ENCODE measurements at regions of chr3 and their contacts with region 1.

Region 1: GRCh38 chr3:100089812-100090668 is 24.3 kb downstream of the FILIP1L start:
- DNase-seq: no peak
- H3K4me3 Mint-ChIP-seq: peak overlapping the region; percentile 0
- H3K27ac Mint-ChIP-seq: peak overlapping the region; percentile 60
- H3K4me1 Mint-ChIP-seq: peaks cover 49% of the 10 kb centered on the region
- H3K27me3 Mint-ChIP-seq: peaks cover 3% of the 10 kb centered on the region

Region 2: GRCh38 chr3:99842826-99843589 is 247.0 kb before region 1 on chr3:
- intact Hi-C with region 1: loop called (anchors 5 kb)
- DNase-seq: no peak
- H3K4me3 Mint-ChIP-seq: no peak overlapping the region
- H3K27ac Mint-ChIP-seq: peak overlapping the region; percentile 31
- H3K4me1 Mint-ChIP-seq: peaks cover 26% of the 10 kb centered on the region
- H3K27me3 Mint-ChIP-seq: no peaks in the 10 kb centered on the region

Region 3: DNA sequence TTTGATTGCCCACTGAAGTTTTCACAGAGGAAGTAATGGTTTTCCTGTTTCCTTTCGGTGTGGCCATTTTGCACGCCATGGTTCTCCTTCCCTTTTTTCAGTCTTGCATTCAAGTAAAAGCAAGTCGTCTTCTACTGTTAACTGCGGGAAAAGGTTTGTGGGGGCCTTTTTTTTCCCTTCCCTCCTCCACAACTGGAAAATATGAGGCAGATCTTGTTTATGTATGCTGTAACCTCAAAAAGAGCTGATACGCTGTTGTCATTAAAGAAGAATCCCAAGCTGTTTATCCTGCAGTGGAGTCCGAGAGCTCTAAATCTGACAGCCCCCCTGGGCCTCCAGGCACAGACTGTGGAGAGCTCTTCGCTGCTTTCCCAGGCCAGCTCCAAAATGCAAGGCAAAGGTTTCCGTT is 16.1 kb before region 1 on chr3:
- intact Hi-C with region 1: loop called (anchors 1 kb)
- DNase-seq: peak; percentile 8
- H3K4me3 Mint-ChIP-seq: peak overlapping the region; percentile 70
- H3K27ac Mint-ChIP-seq: peak overlapping the region; percentile 95
- H3K4me1 Mint-ChIP-seq: peaks cover 68% of the 10 kb centered on the region
- H3K27me3 Mint-ChIP-seq: no peaks in the 10 kb centered on the region

Region 4: DNA sequence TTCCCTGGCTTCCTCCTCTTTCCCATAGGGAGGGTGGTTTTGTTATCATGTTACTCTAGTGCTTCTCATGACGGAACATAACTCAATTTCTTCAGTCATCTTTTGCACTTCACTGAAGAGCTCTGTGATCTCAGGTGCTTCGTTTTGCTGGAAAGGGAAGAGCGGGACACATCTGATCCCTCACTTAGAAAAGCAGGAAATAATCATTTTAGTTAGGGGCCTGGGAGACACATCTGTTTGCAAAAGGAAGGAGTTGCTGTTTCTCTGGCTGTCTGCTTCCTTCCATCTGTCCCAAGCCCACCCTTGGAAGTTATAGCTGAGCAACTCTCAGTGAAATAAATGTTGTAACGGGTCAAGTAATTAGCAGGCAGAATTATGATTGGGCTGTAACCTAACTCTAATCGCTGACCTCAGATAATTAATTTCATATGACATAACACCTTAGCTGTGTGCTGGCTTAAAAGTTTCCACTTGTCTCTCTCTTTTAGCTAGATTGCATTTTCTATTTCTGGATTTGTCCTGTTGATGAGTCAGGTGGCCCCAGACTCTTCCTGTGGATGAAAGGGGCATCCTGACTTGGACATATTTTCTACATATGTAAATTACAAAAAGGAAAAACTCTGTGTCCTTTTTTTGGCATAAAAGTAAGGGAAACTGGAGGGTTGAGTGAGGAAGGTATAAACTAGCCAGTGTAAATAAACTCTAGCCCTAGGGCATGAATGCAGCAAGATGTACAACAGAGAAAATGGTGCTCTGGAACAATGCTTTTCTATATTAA is 35.3 kb after region 1 on chr3:
- intact Hi-C with region 1: no loop called
- DNase-seq: no peak
- H3K4me3 Mint-ChIP-seq: no peak overlapping the region
- H3K27ac Mint-ChIP-seq: no peak overlapping the region
- H3K4me1 Mint-ChIP-seq: peaks cover 13% of the 10 kb centered on the region
- H3K27me3 Mint-ChIP-seq: no peaks in the 10 kb centered on the region

Region 5: GRCh38 chr3:100210772-100211135 is 120.7 kb after region 1 on chr3:
- intact Hi-C with region 1: loop called (anchors 1 kb)
- DNase-seq: peak; percentile 7
- H3K4me3 Mint-ChIP-seq: peak overlapping the region; percentile 57
- H3K27ac Mint-ChIP-seq: peak overlapping the region; percentile 77
- H3K4me1 Mint-ChIP-seq: peaks cover 27% of the 10 kb centered on the region
- H3K27me3 Mint-ChIP-seq: peaks cover 6% of the 10 kb centered on the region

Region 6: DNA sequence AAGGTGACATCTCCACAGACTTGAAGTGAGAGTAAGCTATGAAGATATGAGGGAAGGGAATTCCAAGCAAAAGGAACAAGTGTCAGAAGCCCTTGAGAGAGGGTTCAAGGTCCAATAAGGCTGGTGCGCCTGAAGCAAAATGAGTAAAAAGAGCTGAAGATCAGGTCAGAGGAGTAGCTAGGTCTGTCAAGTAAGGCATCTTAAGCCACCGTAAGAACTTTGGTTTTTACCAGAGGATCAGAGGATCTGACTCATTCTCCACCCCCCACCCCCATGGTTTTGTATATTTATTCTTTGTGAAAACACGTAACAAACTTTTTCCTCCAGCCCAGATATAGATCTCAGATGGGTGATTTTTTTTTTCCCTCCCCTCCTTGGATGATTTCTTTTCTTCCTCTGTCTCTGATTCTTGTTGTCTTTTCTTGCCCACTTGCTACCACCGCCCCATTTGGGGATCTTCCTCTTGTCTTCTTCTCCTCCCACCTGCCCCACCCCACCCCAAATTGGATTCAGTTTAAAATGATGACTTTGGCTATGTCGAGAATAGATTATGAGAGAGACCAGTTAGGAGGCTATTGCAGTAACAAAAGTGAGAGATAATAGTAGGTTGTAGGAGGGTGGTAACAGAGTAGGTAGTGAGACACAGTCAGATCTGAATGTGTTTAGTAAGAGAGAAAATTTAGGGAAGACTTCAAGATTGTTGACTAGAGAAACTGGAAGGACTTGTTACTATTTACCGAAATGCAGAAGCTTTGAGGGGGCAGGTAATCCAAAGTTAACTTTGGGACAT is 1477.7 kb after region 1 on chr3:
- intact Hi-C with region 1: loop called (anchors 5 kb)
- DNase-seq: no peak
- H3K4me3 Mint-ChIP-seq: peak overlapping the region; percentile 24
- H3K27ac Mint-ChIP-seq: peak overlapping the region; percentile 96
- H3K4me1 Mint-ChIP-seq: peaks cover 70% of the 10 kb centered on the region
- H3K27me3 Mint-ChIP-seq: no peaks in the 10 kb centered on the region